Naive thymus-derived CD4-positive, alpha-beta T cell (primary cell): ENCODE measurements at regions of chr12 and their contacts with region 1.

Region 1: GRCh38 chr12:9940375-9940774 is 8.2 kb upstream of the CLEC2A start:
- DNase-seq: peak in 3 of 9 donors; percentile 20 to 36 (median 24)
- ATAC-seq: no peak
- H3K4me3 ChIP-seq: no peak overlapping the region
- H3K4me3 Mint-ChIP-seq: no peak overlapping the region
- H3K27ac ChIP-seq: no peak overlapping the region
- H3K27ac Mint-ChIP-seq: peak overlapping the region in 2 of 9 donors; percentile 8 to 32
- H3K4me1 ChIP-seq: no peaks in the 10 kb centered on the region
- H3K4me1 Mint-ChIP-seq: peaks cover 7 to 27% (median 14%) of the 10 kb centered on the region in 7 donors
- H3K27me3 ChIP-seq: no peaks in the 10 kb centered on the region
- H3K27me3 Mint-ChIP-seq: peaks cover 0 to 34% (median 0%) of the 10 kb centered on the region in 5 donors

Region 2: GRCh38 chr12:9776778-9777177 is 163.6 kb before region 1 on chr12:
- CTCF ChIA-PET with region 1: no interaction called
- POLR2A ChIA-PET with region 1: no interaction called
- intact Hi-C with region 1: no loop called
- DNase-seq: peak in 3 of 9 donors; percentile 31 to 59 (median 49)
- ATAC-seq: peak; percentile 54
- H3K4me3 ChIP-seq: no peak overlapping the region
- H3K4me3 Mint-ChIP-seq: peak overlapping the region in 4 of 10 donors; percentile 21 to 34 (median 28)
- H3K27ac ChIP-seq: no peak overlapping the region
- H3K27ac Mint-ChIP-seq: peak overlapping the region in 6 of 9 donors; percentile 9 to 90 (median 68)
- H3K4me1 ChIP-seq: peaks cover 38 to 48% of the 10 kb centered on the region in 2 donors
- H3K4me1 Mint-ChIP-seq: peaks cover 51 to 97% (median 87%) of the 10 kb centered on the region in 7 donors
- H3K27me3 ChIP-seq: no peaks in the 10 kb centered on the region
- H3K27me3 Mint-ChIP-seq: no peaks in the 10 kb centered on the region

Region 3: DNA sequence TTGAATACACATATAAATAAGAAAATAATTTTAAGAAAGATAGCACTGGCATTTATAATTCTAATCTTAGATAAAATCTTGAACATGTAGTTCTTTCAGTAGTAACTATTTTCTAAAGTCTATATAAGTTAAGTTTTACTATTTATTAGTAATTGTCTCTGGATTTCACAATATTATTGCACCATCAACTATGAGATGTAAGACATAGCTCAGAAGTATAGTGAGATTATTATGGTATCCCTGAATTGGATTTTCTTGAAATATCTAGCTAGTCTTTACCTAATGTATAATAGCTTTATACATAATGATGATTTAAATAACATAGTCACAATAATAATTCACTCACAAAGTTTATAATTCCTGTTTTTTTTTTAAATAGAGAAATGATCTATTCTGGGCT is 37.5 kb after region 1 on chr12:
- CTCF ChIA-PET with region 1: no interaction called
- POLR2A ChIA-PET with region 1: no interaction called
- intact Hi-C with region 1: no loop called
- DNase-seq: no peak
- ATAC-seq: no peak
- H3K4me3 ChIP-seq: no peak overlapping the region
- H3K4me3 Mint-ChIP-seq: no peak overlapping the region
- H3K27ac ChIP-seq: no peak overlapping the region
- H3K27ac Mint-ChIP-seq: no peak overlapping the region
- H3K4me1 ChIP-seq: no peaks in the 10 kb centered on the region
- H3K4me1 Mint-ChIP-seq: peaks cover 0 to under 1% (median 0%) of the 10 kb centered on the region in 7 donors
- H3K27me3 ChIP-seq: no peaks in the 10 kb centered on the region
- H3K27me3 Mint-ChIP-seq: peaks cover 0 to 61% (median 6%) of the 10 kb centered on the region in 5 donors

Region 4: DNA sequence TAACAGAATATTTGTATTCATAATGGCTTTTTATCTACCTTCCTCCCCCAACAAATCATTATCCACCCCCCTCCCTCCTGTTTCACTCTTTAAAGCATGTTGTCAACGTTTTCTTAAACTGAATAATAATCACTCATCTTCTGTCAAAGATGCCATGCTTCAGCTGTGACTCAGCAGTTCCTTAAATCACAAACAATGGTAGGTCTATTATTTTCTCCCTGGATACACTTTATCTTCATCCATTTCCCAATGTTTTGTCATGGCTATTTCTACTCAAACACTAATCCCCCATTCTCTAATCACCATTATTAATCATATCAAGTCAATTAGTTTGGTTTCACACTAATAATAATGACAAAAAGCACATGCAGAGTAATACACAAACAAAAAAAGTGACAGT is 76.5 kb after region 1 on chr12:
- CTCF ChIA-PET with region 1: interaction called, 14 read pairs
- POLR2A ChIA-PET with region 1: no interaction called
- intact Hi-C with region 1: no loop called
- DNase-seq: no peak
- ATAC-seq: no peak
- H3K4me3 ChIP-seq: no peak overlapping the region
- H3K4me3 Mint-ChIP-seq: no peak overlapping the region
- H3K27ac ChIP-seq: no peak overlapping the region
- H3K27ac Mint-ChIP-seq: no peak overlapping the region
- H3K4me1 ChIP-seq: no peaks in the 10 kb centered on the region
- H3K4me1 Mint-ChIP-seq: no peaks in the 10 kb centered on the region
- H3K27me3 ChIP-seq: no peaks in the 10 kb centered on the region
- H3K27me3 Mint-ChIP-seq: peaks cover 0 to 33% (median 8%) of the 10 kb centered on the region in 5 donors

Region 5: DNA sequence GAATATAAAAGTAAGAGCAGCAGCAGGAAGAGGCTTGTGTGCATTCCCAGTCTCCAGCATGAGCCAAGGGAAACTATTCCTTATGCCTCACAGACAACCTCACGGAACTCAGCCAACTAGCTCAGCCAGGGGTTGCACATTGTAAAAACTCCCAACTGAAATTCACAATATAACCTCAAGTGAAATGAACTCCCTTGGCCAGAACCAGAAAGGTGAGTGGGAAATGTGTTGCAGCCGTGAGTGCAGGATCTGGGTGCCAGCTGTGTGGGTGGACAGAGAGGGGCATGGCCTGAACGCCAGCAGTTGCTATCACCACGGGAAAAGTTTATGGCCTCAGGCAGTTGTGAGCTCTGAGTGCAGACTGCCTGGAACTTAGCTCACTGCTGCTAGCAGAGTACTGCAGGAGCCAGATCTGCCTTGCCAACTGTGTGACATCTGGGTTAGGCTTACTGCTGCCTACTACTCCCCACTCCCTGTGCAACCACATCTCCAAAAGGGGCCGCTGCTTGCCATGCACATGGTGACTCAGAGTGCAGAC is 160.7 kb after region 1 on chr12:
- CTCF ChIA-PET with region 1: no interaction called
- POLR2A ChIA-PET with region 1: no interaction called
- intact Hi-C with region 1: no loop called
- DNase-seq: no peak
- ATAC-seq: no peak
- H3K4me3 ChIP-seq: no peak overlapping the region
- H3K4me3 Mint-ChIP-seq: no peak overlapping the region
- H3K27ac ChIP-seq: no peak overlapping the region
- H3K27ac Mint-ChIP-seq: no peak overlapping the region
- H3K4me1 ChIP-seq: no peaks in the 10 kb centered on the region
- H3K4me1 Mint-ChIP-seq: no peaks in the 10 kb centered on the region
- H3K27me3 ChIP-seq: no peaks in the 10 kb centered on the region
- H3K27me3 Mint-ChIP-seq: peaks cover 4 to 29% (median 7%) of the 10 kb centered on the region in 5 donors

Region 6: GRCh38 chr12:10140001-10140400 is 199.6 kb after region 1 on chr12:
- CTCF ChIA-PET with region 1: interaction called, 13 read pairs
- POLR2A ChIA-PET with region 1: no interaction called
- intact Hi-C with region 1: loop called (anchors 1 kb)
- DNase-seq: peak in 7 of 9 donors; percentile 26 to 66 (median 49)
- ATAC-seq: peak; percentile 72
- H3K4me3 ChIP-seq: no peak overlapping the region
- H3K4me3 Mint-ChIP-seq: no peak overlapping the region
- H3K27ac ChIP-seq: no peak overlapping the region
- H3K27ac Mint-ChIP-seq: no peak overlapping the region
- H3K4me1 ChIP-seq: no peaks in the 10 kb centered on the region
- H3K4me1 Mint-ChIP-seq: peaks cover 0 to 3% (median 0%) of the 10 kb centered on the region in 7 donors
- H3K27me3 ChIP-seq: no peaks in the 10 kb centered on the region
- H3K27me3 Mint-ChIP-seq: peaks cover 0 to 51% (median 0%) of the 10 kb centered on the region in 5 donors

Region 7: GRCh38 chr12:10190558-10191388 is 250.4 kb after region 1 on chr12:
- CTCF ChIA-PET with region 1: no interaction called
- POLR2A ChIA-PET with region 1: no interaction called
- intact Hi-C with region 1: loop called (anchors 1 to 10 kb)
- DNase-seq: peak; percentile 21 to 65 (median 48)
- ATAC-seq: peak; percentile 97
- H3K4me3 ChIP-seq: no peak overlapping the region
- H3K4me3 Mint-ChIP-seq: no peak overlapping the region
- H3K27ac ChIP-seq: no peak overlapping the region
- H3K27ac Mint-ChIP-seq: no peak overlapping the region
- H3K4me1 ChIP-seq: no peaks in the 10 kb centered on the region
- H3K4me1 Mint-ChIP-seq: peaks cover 0 to 8% (median 0%) of the 10 kb centered on the region in 7 donors
- H3K27me3 ChIP-seq: no peaks in the 10 kb centered on the region
- H3K27me3 Mint-ChIP-seq: peaks cover 8 to 32% (median 13%) of the 10 kb centered on the region in 5 donors

Region 8: DNA sequence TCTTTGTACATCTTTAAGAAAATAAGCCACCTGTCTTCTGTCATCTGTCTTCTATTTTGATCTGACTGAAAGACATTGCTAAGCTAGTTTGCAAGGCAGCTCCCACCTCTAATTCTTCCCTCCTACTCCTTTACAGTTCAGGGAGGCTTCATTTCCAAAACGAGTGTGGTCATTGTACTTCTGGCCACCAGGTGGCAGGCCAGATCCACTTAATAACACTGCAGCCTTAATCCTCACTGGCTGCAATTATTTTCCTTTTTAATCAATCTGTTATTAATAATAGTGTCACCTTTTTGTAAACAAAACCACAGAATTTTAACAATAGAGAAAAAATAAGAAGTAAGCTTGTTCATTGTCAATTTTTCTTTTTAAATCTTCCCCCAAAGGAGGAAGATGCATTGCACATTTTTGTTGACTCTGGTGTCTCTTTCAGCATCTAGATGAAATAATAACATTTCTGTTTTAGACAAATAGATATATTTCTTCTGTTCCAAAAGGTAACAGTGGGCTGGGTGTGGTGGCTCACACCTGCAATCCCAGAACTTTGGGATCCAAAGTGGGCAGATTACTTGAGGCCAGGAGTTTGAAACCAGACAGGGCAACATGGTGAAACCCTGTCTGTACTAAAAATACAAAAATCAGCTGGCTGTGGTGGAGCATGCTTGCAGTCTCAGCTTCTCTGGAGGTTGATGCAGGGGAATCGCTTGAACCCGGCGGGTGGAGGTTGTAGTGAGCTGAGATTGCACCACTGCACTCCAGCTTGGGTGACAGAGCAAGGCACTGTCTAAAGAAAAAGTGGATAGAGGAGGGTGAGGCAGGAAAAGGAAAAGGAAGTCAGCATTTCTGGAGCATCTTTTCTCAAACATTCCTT is 295.6 kb after region 1 on chr12:
- CTCF ChIA-PET with region 1: no interaction called
- POLR2A ChIA-PET with region 1: no interaction called
- intact Hi-C with region 1: no loop called
- DNase-seq: peak in 7 of 9 donors; percentile 16 to 46 (median 43)
- ATAC-seq: peak; percentile 84
- H3K4me3 ChIP-seq: no peak overlapping the region
- H3K4me3 Mint-ChIP-seq: no peak overlapping the region
- H3K27ac ChIP-seq: no peak overlapping the region
- H3K27ac Mint-ChIP-seq: no peak overlapping the region
- H3K4me1 ChIP-seq: peaks cover 0 to 16% of the 10 kb centered on the region in 2 donors
- H3K4me1 Mint-ChIP-seq: peaks cover 0 to 5% (median 0%) of the 10 kb centered on the region in 7 donors
- H3K27me3 ChIP-seq: no peaks in the 10 kb centered on the region
- H3K27me3 Mint-ChIP-seq: peaks cover 0 to 25% (median 0%) of the 10 kb centered on the region in 5 donors

Region 9: GRCh38 chr12:10613349-10614055 is 673.1 kb after region 1 on chr12 and contains the start of gene MAGOHB:
- CTCF ChIA-PET with region 1: no interaction called
- POLR2A ChIA-PET with region 1: no interaction called
- intact Hi-C with region 1: loop called in 1 of 2 experiments (anchors 10 kb)
- DNase-seq: peak; percentile 94 to 100 (median 97)
- ATAC-seq: peak; percentile 96
- H3K4me3 ChIP-seq: peak within 1 kb of the TSS; percentile 74
- H3K4me3 Mint-ChIP-seq: peak within 1 kb of the TSS; percentile 93 to 100 (median 98)
- H3K27ac ChIP-seq: peak within 1 kb of the TSS; percentile 93
- H3K27ac Mint-ChIP-seq: peak within 1 kb of the TSS; percentile 97 to 100 (median 100)
- H3K4me1 ChIP-seq: peaks cover 4 to 11% of the 10 kb centered on the region in 2 donors
- H3K4me1 Mint-ChIP-seq: peaks cover 12 to 38% (median 33%) of the 10 kb centered on the region in 7 donors
- H3K27me3 ChIP-seq: no peaks in the 10 kb centered on the region
- H3K27me3 Mint-ChIP-seq: peaks cover 0 to 26% (median 7%) of the 10 kb centered on the region in 5 donors
- total RNA-seq, gene MAGOHB: 12.1 to 43.1 (median 24.8) TPM